Mammary epithelial cell (primary cell): ENCODE measurements at regions of chr10 and their contacts with region 1.

Region 1: GRCh38 chr10:62851442-62851841 is 35.3 kb upstream of the EGR2 start:
- DNase-seq: no peak
- H3K4me3 ChIP-seq: no peak overlapping the region
- H3K27ac ChIP-seq: no peak overlapping the region
- H3K4me1 ChIP-seq: no peaks in the 10 kb centered on the region
- H3K27me3 ChIP-seq: no peaks in the 10 kb centered on the region
- CTCF ChIP-seq: peak; percentile 52 to 61

Region 2: GRCh38 chr10:63003816-63004453 is 152.5 kb after region 1 on chr10:
- CTCF ChIA-PET with region 1: no interaction called
- dilution Hi-C with region 1: no loop called
- in situ Hi-C with region 1: no loop called
- intact Hi-C with region 1: loop called (anchors 10 kb)
- DNase-seq: no peak
- H3K4me3 ChIP-seq: no peak overlapping the region
- H3K27ac ChIP-seq: no peak overlapping the region
- H3K4me1 ChIP-seq: peaks cover 14% of the 10 kb centered on the region
- H3K27me3 ChIP-seq: no peaks in the 10 kb centered on the region
- CTCF ChIP-seq: peak; percentile 30 to 40